Right cardiac atrium (tissue), 5 donors: ENCODE measurements at regions of chr2 and their contacts with region 1.

Region 1: DNA sequence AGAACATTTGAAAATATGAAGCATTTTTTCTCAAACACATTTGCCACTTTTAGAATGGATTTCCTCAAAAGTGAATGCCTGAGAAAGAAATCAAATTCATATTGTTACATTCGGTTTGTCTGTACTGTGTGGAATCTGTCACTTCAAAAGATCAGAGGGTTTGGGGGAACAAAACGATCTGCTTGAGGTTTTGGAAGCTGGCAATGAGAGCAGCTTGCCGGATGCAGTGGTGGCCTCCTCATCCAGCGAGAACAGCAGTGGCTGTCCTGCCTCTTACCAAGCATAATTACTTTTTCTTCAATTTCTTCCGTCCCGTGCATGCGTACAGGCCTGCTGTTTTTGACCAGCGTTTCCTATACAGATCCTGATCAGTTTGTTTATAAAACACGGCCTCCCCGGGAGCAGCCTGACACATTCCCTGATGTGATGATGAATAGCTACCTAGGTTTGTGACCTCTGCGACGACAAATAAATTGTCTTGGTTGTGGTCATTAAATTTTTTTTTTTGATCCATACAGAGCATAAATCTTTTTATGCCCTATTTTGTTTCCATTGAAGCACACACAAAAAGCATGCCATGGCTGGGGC is 45.2 kb downstream of the ITGA6 start:
- DNase-seq: no peak
- ATAC-seq: no peak
- H3K4me3 ChIP-seq: no peak overlapping the region
- H3K27ac ChIP-seq: no peak overlapping the region
- H3K4me1 ChIP-seq: no peaks in the 10 kb centered on the region
- H3K27me3 ChIP-seq: no peaks in the 10 kb centered on the region

Region 2: GRCh38 chr2:171692331-171692730 is 780.2 kb before region 1 on chr2:
- intact Hi-C with region 1: loop called in 1 of 4 experiments (anchors 10 kb)
- DNase-seq: no peak
- ATAC-seq: no peak
- H3K4me3 ChIP-seq: no peak overlapping the region
- H3K27ac ChIP-seq: no peak overlapping the region
- H3K4me1 ChIP-seq: peaks cover 1% of the 10 kb centered on the region
- H3K27me3 ChIP-seq: no peaks in the 10 kb centered on the region